Right cardiac atrium (tissue), 5 donors: ENCODE measurements at regions of chr10 and their contacts with region 1.

Region 1: DNA sequence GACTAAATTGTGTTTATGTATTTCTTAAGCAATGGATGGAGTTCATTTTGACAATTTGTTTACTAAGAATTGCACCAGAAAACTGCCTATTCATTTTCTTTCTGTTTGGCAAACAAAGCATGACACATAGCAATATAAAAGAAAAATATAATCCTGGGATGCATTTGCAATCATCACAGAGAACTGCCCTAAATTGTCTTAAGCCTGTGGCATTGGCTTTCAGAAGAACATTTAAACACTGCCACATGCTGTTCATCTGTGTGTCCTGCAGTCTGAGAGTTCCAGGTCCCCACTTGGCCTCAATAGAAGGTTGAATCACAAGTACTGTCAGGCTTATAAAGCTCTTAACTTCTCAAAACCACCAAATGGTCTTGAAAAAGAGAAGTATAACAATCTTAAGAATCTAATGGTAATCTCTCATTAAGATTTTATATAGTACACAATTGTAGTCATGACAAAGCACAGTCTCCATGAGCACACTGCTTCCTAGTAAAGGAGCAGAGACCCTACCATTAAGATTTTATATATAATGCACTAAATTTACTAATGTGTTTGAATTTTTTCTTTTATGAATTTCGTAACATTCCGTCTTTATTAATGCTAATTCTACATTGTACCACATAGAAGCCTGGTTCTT is 29.9 kb downstream of the RNLS start:
- DNase-seq: peak in 2 of 3 donors; percentile 18 to 40
- ATAC-seq: peak; percentile 89 to 92
- H3K4me3 ChIP-seq: no peak overlapping the region
- H3K27ac ChIP-seq: no peak overlapping the region
- H3K4me1 ChIP-seq: peaks cover 5% of the 10 kb centered on the region
- H3K27me3 ChIP-seq: no peaks in the 10 kb centered on the region

Region 2: DNA sequence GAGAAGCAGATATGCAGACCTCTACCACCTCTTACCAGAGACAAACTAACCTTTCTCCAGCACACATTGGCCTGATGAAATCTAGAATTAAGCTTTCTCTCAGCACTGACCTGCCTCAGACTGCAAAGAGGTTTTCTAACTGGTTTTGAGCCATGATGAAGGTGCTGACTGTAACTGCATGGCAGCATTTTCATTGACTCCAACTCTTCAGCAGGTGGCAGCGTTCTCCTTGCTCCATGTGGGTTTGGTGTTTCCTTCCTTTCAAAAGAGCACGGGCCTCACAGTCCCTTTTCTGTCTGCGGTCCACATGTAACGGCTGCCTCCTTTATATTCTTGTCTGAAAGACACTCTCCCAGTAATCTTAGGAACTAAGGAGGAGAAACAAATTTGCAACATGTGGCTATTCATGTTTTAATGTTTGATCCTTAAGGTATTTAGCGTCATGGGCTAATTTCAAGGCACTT is 702.5 kb before region 1 on chr10:
- intact Hi-C with region 1: loop called in 3 of 4 experiments (anchors 5 to 10 kb)
- DNase-seq: peak; percentile 45 to 67 (median 65)
- ATAC-seq: peak; percentile 93
- H3K4me3 ChIP-seq: no peak overlapping the region
- H3K27ac ChIP-seq: no peak overlapping the region
- H3K4me1 ChIP-seq: no peaks in the 10 kb centered on the region
- H3K27me3 ChIP-seq: no peaks in the 10 kb centered on the region

Region 3: DNA sequence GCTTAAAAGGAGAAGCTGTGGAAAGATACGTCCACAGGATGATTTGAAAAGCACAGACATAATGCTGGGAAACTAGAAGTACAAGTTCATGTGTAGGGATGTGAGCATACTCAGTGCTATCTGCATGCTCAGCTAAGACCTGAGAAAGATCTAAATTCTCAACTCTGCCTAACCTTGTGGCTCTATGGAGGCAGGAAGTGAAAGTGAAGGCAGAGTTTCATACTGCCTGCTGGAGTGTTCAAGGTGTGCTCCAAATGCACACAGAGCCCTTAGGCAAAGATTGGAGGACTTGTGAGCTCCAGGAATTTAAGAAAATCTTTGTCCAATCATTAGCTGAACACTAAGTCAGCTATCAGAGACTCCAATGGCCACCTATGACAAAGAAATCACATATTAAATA is 161.0 kb before region 1 on chr10:
- intact Hi-C with region 1: loop called in 2 of 4 experiments (anchors 10 kb)
- DNase-seq: no peak
- ATAC-seq: no peak
- H3K4me3 ChIP-seq: no peak overlapping the region
- H3K27ac ChIP-seq: no peak overlapping the region
- H3K4me1 ChIP-seq: peaks cover 3% of the 10 kb centered on the region
- H3K27me3 ChIP-seq: no peaks in the 10 kb centered on the region

Region 4: DNA sequence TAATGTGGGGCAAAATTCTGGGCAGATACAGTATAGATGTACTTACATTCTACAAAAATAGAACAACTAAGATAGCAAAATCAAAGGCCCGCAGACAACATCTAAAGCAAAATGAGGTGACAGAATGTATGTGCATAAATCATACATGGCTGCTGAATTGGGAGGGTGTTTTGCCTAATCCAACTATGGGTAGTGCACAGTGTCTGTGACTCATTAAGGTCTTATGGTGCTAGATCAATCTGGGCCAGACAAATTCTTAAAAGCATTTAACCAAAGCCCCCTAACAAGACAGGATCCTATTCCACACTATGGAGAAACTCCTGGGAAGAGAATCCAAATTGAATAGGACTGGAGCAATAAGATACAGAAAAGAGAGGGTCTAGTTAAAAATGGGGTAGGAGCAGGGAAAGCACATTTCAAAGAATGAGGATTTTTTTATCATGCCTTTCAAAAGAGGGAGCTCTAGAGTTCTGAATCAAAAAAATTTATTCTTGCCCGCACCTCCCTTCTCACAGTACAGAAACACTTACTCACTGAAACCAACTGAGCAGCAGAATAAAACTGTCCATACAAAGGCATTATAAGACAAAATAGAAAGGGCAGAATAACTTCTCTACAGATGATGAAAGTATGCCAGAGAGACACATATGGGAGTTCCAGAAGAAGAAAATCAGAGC is 151.4 kb before region 1 on chr10:
- intact Hi-C with region 1: loop called in 2 of 4 experiments (anchors 5 to 10 kb)
- DNase-seq: no peak
- ATAC-seq: no peak
- H3K4me3 ChIP-seq: no peak overlapping the region
- H3K27ac ChIP-seq: no peak overlapping the region
- H3K4me1 ChIP-seq: no peaks in the 10 kb centered on the region
- H3K27me3 ChIP-seq: no peaks in the 10 kb centered on the region

Region 5: GRCh38 chr10:88820748-88821389 is 267.6 kb after region 1 on chr10:
- intact Hi-C with region 1: no loop called
- DNase-seq: no peak
- ATAC-seq: no peak
- H3K4me3 ChIP-seq: no peak overlapping the region
- H3K27ac ChIP-seq: no peak overlapping the region
- H3K4me1 ChIP-seq: no peaks in the 10 kb centered on the region
- H3K27me3 ChIP-seq: no peaks in the 10 kb centered on the region